ENCODE measurements at regions of chr16 and their contacts with region 1.

Region 1: GRCh38 chr16:53945996-53946395 is 242.0 kb downstream of the FTO start:
- DNase-seq: no peak
- ATAC-seq: peak; percentile 81
- H3K4me3 ChIP-seq: no peak overlapping the region
- H3K27ac ChIP-seq: no peak overlapping the region
- H3K4me1 ChIP-seq: peaks cover 3% of the 10 kb centered on the region; the same call in 1 of the 2 replicates
- H3K27me3 ChIP-seq: no peaks in the 10 kb centered on the region
- CTCF ChIP-seq: peak; percentile 64 to 67 (median 65)
- EP300 ChIP-seq: no peak
- POLR2A ChIP-seq: no peak
- RAD21 ChIP-seq: peak; percentile 74

Region 2: GRCh38 chr16:54277845-54278703 is 332.1 kb after region 1 on chr16:
- CTCF ChIA-PET with region 1: no interaction called
- POLR2A ChIA-PET with region 1: no interaction called
- RAD21 ChIA-PET with region 1: no interaction called
- SMC1A ChIA-PET with region 1: no interaction called
- in situ Hi-C with region 1: no loop called
- intact Hi-C with region 1: loop called (anchors 5 kb)
- DNase-seq: no peak
- ATAC-seq: no peak
- H3K4me3 ChIP-seq: no peak overlapping the region
- H3K27ac ChIP-seq: no peak overlapping the region
- H3K4me1 ChIP-seq: no peaks in the 10 kb centered on the region
- H3K27me3 ChIP-seq: peaks cover 4 to 6% of the 10 kb centered on the region in 2 experiments; a peak in 3 of 4 replicates
- CTCF ChIP-seq: no peak
- EP300 ChIP-seq: no peak
- POLR2A ChIP-seq: no peak
- RAD21 ChIP-seq: no peak

Region 3: GRCh38 chr16:55257966-55258613 is 1312.1 kb after region 1 on chr16:
- CTCF ChIA-PET with region 1: interaction called, 4 read pairs
- POLR2A ChIA-PET with region 1: no interaction called
- RAD21 ChIA-PET with region 1: no interaction called
- SMC1A ChIA-PET with region 1: interaction called, 3 read pairs
- in situ Hi-C with region 1: no loop called
- intact Hi-C with region 1: loop called (anchors 5 kb)
- DNase-seq: no peak
- ATAC-seq: peak; percentile 84
- H3K4me3 ChIP-seq: no peak overlapping the region
- H3K27ac ChIP-seq: no peak overlapping the region
- H3K4me1 ChIP-seq: no peaks in the 10 kb centered on the region
- H3K27me3 ChIP-seq: no peaks in the 10 kb centered on the region
- CTCF ChIP-seq: peak; percentile 46 to 61 (median 55); a peak in 5 of 6 replicates
- EP300 ChIP-seq: no peak
- POLR2A ChIP-seq: no peak
- RAD21 ChIP-seq: peak; percentile 70